Activated CD4-positive, alpha-beta T cell treated with anti-CD3 and anti-CD28 coated beads for 36 hours (primary cell): ENCODE measurements at regions of chr7 and their contacts with region 1.

Region 1: DNA sequence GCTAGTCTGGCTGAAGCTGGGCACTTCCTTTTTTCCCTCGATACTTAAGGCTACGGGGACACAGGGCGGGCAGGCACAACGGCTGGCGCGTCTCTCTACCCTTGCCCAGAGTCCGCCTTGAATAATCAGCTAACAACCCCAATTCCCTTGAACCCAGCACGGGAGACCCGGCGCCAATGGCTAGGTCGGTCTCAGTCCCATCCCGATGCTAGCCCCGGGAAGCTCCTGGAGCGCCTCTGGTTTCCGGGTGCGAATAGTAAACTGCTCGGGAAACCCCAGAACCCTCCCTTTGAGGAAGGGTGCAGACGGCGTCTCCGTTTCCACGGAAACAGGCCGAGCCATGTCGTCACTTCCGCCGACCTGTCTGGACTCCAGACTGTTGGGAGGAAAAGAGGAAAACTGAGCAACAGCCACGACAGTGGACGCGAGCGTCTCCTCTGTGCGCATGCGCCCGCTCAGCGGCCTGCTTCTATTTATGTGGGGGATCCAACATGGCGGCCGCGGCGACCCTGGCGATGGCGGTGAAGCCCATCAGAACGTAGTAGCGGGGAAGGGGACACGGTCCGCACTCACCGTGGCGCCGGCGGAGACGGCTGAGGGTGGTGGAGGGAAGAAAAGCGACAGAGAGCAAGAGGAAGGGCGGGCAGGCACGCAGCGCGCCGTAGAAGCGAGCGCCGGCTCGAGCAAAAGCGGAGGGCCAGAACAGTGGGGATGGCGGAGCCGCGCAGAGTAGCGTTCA is at the start of gene UBN2:
- DNase-seq: peak; percentile 96
- ATAC-seq: peak; percentile 88
- H3K4me3 Mint-ChIP-seq: peak within 1 kb of the TSS; percentile 98
- H3K27ac Mint-ChIP-seq: peak within 1 kb of the TSS; percentile 93
- H3K4me1 Mint-ChIP-seq: peaks cover 20% of the 10 kb centered on the region
- H3K27me3 Mint-ChIP-seq: peaks cover 3% of the 10 kb centered on the region
- total RNA-seq, gene UBN2: 8.3 to 11.8 TPM

Region 2: DNA sequence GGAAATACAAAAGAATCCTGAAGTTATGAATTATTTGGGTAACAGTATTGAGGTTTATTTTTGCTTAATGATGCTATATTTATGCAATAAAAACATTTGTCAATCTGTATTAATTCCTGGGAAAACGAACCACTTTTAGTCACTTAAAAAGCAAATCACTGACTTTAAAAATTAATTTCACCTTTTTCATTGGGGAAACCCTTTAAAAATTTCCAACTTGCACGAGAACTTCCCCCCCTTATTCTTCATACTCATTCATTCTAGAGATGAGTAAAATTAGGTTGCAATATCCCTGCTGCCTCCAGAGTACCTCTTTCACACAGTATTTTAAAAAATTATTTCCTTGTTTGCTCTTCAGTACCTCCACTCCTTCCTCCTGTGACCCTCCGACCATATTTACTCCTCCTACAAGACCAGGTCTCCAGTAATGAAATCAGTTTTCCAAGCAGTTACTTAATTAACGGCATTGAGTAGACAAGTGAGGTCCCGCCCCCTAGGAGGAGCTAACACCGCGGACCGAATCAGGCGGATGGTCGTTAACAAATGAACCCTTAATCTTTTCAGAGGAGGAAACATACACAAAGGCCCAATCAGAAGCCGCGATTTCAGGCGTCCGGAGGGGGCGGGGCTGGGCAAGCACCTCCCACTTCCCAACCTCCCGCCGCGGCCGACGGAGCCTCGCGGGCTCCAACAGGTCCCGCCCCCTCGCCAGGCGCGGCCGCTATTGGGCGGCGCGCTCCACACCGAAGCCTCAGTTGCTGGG is 771.3 kb before region 1 on chr7:
- CTCF ChIA-PET with region 1: no interaction called
- POLR2A ChIA-PET with region 1: no interaction called
- intact Hi-C with region 1: loop called in 1 of 2 experiments (anchors 5 kb)
- DNase-seq: peak; percentile 99
- ATAC-seq: peak; percentile 88
- H3K4me3 Mint-ChIP-seq: peak overlapping the region; percentile 85
- H3K27ac Mint-ChIP-seq: peak overlapping the region; percentile 85
- H3K4me1 Mint-ChIP-seq: peaks cover 25% of the 10 kb centered on the region
- H3K27me3 Mint-ChIP-seq: no peaks in the 10 kb centered on the region

Region 3: DNA sequence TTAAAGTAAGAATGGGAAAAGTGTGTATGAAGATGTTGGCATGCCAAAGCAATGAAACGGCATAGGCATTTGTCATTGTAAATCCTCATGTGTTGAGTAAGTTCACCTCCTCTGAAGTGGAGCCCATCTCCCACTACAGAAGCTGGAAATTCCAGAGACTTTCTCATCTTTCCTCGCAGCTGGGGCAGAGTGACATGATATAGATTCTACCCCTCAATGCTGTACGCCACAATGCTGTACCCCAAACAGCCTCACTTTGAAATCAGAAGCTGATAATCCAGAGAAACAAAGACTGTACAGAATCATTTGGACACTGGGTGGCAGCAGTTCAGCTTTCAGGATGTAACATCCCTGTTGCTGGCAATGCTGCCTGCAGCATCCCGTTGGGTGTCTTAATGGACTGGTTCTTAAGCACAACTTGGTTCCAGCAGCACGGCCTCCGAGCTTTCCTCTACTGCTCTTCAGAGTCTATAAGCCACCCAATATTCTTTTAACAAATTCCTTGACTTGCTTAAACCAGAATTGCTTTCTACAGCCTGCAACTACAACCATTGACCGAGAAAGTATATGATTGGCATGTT is 213.9 kb before region 1 on chr7:
- CTCF ChIA-PET with region 1: no interaction called
- POLR2A ChIA-PET with region 1: no interaction called
- intact Hi-C with region 1: loop called in 1 of 2 experiments (anchors 5 kb)
- DNase-seq: peak; percentile 78
- ATAC-seq: peak; percentile 98
- H3K4me3 Mint-ChIP-seq: no peak overlapping the region
- H3K27ac Mint-ChIP-seq: no peak overlapping the region
- H3K4me1 Mint-ChIP-seq: peaks cover 6% of the 10 kb centered on the region
- H3K27me3 Mint-ChIP-seq: peaks cover 4% of the 10 kb centered on the region

Region 4: GRCh38 chr7:139035586-139036353 is 195.2 kb before region 1 on chr7 and contains the start of gene ZC3HAV1L:
- CTCF ChIA-PET with region 1: no interaction called
- POLR2A ChIA-PET with region 1: no interaction called
- intact Hi-C with region 1: loop called in 1 of 2 experiments (anchors 5 kb)
- DNase-seq: peak; percentile 83
- ATAC-seq: peak; percentile 96
- H3K4me3 Mint-ChIP-seq: peak within 1 kb of the TSS; percentile 82
- H3K27ac Mint-ChIP-seq: peak within 1 kb of the TSS; percentile 88
- H3K4me1 Mint-ChIP-seq: peaks cover 22% of the 10 kb centered on the region
- H3K27me3 Mint-ChIP-seq: no peaks in the 10 kb centered on the region
- total RNA-seq, gene ZC3HAV1L: 19.8 to 23.2 TPM

Region 5: DNA sequence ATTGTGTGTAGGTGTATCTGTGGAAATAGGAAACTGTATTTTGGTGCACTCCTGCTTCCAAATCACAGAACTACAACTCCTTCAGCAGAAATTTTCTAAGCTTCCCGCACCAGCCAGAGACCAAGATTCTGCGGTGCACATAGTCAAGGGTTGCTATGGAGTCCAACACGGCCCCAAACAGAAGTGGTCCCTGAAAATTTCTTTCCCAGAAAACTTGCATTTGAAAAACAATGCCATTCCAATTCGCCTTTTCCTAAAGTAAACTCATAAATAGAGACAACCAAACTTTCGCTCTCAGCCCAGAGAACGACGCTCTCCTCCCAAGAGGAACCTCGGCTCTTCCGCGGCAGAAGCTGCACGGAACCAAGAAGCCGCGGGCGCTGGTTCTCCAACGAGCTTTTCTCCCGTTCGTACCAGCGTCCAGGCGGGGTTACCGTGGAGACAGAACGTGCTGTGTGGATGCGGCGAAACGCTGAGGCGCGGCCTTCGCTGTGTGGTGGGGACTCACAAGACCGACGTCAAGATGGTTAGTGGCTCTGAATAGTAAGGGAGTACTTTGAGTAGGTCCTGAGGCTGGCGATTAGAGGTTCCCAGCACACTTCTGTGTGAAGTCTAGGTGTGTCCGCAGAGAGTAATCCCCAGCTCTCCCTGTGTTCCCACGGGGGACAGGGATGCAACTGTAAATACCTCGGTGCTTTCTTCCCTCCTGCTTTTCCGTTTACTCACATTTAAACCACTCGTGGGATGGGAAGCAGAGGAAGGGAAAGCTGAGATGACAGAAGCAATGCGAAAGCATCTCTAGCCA is 97.4 kb before region 1 on chr7:
- CTCF ChIA-PET with region 1: interaction called, 3 read pairs
- POLR2A ChIA-PET with region 1: interaction called, 3 read pairs
- intact Hi-C with region 1: loop called (anchors 1 kb)
- DNase-seq: peak; percentile 93
- ATAC-seq: peak; percentile 99
- H3K4me3 Mint-ChIP-seq: peak overlapping the region; percentile 74
- H3K27ac Mint-ChIP-seq: peak overlapping the region; percentile 71
- H3K4me1 Mint-ChIP-seq: peaks cover 21% of the 10 kb centered on the region
- H3K27me3 Mint-ChIP-seq: no peaks in the 10 kb centered on the region

Region 6: DNA sequence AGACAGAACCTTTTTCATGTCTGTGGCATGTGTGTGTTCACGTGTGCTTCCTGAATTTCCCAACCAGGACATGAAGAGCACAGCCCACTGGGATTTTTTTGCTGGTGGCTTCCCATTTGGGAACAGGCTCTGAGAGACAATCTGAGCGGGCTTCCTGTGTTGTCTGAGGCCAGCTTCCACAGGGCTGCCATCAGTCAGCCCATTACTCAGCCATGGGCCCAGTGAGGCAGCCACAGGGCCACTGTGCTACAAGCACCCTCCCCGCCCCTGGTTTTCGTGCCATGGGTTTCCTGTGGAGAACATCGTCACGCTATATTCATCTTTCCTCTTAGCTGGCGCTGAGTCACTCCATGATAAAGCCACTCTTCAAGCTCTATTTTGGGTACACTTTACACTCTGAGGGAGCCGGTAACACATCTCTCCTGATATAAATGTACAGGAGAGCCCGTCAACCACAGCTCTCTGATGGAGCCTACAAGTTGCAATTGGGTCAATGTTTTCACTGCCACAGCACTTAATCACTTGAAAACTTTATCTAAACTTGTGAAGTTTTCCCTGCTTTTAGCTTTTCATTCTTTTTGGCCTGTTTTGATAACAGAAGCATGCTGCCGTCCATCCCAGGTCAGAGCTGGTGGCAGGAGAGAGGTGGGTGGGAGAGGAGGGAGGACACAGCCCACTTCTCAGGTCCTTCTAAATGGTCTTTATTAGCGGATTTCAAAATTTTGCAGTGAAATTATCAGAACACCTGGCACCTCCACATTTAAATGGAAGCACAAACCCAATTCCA is 449.9 kb after region 1 on chr7:
- CTCF ChIA-PET with region 1: no interaction called
- POLR2A ChIA-PET with region 1: no interaction called
- intact Hi-C with region 1: loop called in 1 of 2 experiments (anchors 5 kb)
- DNase-seq: peak; percentile 94
- ATAC-seq: peak; percentile 73
- H3K4me3 Mint-ChIP-seq: peak overlapping the region; percentile 68
- H3K27ac Mint-ChIP-seq: peak overlapping the region; percentile 98
- H3K4me1 Mint-ChIP-seq: peaks cover 53% of the 10 kb centered on the region
- H3K27me3 Mint-ChIP-seq: no peaks in the 10 kb centered on the region